MCF 10A (cell line): ENCODE measurements at regions of chr11 and their contacts with region 1.

Region 1: GRCh38 chr11:75142714-75143419 is 8.0 kb upstream of the SLCO2B1 start:
- DNase-seq: peak; percentile 90
- H3K4me3 Mint-ChIP-seq: no peak overlapping the region
- H3K27ac Mint-ChIP-seq: peak overlapping the region; percentile 53
- H3K4me1 Mint-ChIP-seq: peaks cover 16% of the 10 kb centered on the region
- H3K27me3 Mint-ChIP-seq: peaks cover 16% of the 10 kb centered on the region
- CTCF ChIP-seq: no peak

Region 2: DNA sequence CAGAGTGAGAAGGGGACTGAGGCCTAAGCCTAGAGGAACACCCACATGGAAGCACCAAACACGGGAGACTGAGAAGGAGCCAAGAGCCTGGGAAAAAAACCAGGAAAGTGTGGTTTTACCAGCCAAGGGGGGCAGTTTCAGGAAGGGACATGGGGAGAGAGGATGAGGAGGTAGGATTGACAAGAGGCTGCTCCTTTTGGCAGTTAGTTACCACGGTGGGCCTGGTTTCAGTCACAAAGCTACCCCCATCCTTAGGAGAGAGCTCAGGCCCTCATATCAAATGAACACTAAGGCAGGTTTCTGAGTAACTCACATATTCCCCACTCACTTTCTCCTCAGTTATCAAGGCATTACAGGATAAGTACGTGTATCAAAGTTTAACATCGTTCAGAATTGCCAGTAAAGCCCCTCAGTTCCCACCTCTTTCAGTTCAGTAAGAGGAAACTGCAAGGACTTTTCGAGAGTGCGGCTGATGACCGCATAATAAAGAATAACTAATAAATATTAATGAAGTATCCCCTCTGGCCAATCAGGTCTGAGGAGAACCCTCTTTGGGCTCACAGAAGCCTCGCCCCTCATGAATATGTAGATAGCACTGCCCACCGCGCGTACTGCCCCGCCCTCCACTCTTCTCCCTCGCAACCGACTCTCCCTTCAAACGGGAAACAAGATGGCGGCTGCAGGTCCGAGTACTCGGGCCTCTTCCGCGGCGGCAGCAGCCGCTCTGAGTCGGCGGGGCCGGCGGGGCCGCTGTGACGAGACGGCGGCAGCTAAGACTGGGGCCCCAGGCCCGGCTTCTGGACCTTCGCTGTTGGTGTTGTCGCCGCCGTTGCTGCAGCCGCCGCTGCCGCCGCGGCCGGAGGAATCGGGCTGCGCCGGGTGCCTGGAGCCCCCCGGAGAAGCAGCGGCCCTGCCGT is 394.4 kb before region 1 on chr11 and contains the start of gene RNF169:
- CTCF ChIA-PET with region 1: no interaction called
- POLR2A ChIA-PET with region 1: no interaction called
- intact Hi-C with region 1: no loop called
- DNase-seq: peak; percentile 96
- H3K4me3 Mint-ChIP-seq: peak within 1 kb of the TSS; percentile 91
- H3K27ac Mint-ChIP-seq: peak within 1 kb of the TSS; percentile 85
- H3K4me1 Mint-ChIP-seq: peaks cover 23% of the 10 kb centered on the region
- H3K27me3 Mint-ChIP-seq: no peaks in the 10 kb centered on the region
- CTCF ChIP-seq: no peak
- total RNA-seq, gene RNF169: 15.0 and 18.0 TPM in 2 replicates

Region 3: DNA sequence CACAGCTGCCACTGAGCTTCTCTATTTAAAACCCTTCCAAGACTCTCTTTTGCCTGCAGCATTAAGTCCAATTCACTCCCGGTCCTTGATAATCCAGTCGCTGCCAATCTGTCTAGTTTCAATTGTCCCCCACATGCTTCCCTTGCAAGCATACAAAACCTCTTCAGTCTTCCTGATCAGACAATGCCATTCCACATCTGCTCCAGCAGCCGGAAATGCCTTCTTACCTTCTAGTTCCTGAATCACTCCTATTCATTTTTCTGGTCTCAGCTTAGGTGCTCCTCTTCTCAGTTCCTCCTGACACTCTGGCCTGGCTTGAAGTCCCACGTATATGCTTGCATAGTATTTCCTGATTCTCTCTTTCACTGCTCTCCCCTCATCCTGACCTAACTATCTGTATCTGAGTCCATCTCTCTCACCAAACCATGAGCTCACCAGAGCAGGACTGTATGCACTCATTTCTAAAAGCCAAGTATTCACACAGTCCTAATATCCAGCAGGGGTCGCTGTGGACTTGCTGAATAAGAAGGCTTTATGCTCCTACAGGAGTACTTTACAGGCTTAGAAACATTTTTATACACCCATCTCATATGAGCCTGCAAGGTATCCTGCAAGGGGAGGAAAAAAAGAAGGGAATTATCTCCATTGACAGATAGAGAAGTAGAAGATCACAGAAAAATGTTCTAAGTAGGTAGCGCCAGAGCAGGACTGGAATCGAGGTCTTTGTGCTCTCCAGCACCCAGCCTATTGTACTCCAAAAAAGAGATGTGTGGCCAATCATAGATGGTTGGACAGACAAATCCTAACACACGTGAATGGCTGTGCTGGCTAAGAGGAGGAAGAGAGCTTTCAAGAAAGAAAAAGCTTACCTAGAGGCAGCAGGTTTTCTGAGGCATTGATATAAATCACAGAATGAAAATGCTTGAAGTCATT is 213.2 kb before region 1 on chr11:
- CTCF ChIA-PET with region 1: interaction called, 7 read pairs
- POLR2A ChIA-PET with region 1: no interaction called
- intact Hi-C with region 1: loop called (anchors 5 kb)
- DNase-seq: peak; percentile 94
- H3K4me3 Mint-ChIP-seq: no peak overlapping the region
- H3K27ac Mint-ChIP-seq: no peak overlapping the region
- H3K4me1 Mint-ChIP-seq: peaks cover 4% of the 10 kb centered on the region
- H3K27me3 Mint-ChIP-seq: no peaks in the 10 kb centered on the region
- CTCF ChIP-seq: peak; percentile 84

Region 4: GRCh38 chr11:75040167-75040770 is 102.6 kb before region 1 on chr11:
- CTCF ChIA-PET with region 1: no interaction called
- POLR2A ChIA-PET with region 1: no interaction called
- intact Hi-C with region 1: no loop called
- DNase-seq: no peak
- H3K4me3 Mint-ChIP-seq: no peak overlapping the region
- H3K27ac Mint-ChIP-seq: no peak overlapping the region
- H3K4me1 Mint-ChIP-seq: peaks cover 13% of the 10 kb centered on the region
- H3K27me3 Mint-ChIP-seq: peaks cover 12% of the 10 kb centered on the region
- CTCF ChIP-seq: no peak

Region 5: DNA sequence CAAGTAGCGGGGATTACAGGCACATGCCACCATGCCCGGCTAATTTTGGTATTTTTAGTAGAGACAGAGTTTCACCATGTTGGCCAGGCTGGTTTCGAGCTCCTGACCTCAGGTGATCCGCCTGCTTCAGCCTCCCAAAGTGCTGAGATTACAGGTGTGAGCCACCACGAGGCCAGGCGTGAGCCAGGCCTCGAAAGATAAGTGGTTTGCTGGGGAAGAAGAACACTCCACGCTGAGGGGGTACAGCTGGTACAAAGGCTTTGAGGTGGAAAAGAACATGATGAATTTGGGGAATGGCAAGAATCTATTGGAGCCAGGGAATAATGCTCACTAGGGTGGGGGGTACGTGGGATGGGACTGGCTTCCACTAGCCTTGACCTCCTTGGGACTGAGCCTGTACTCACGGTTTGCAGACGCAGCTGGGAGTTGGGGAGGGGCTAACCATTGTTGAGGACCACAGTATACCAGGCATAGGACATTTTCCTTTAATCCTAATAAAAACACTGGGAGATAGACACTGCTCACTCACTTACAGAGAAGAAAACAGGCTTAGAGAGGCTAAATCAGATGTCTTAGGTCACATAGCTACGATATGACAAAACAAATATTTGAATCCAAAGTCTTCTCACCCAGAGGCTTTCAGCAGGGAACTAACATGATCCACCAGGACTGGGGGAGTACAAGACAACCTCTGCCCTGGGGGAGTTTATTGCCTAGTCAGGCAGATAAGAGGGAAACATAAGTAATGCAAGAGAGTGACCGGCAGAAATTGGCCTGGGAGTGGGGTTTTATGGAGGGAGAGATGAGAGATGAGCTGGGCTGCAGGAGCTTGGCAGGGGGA is 12.9 kb after region 1 on chr11:
- CTCF ChIA-PET with region 1: interaction called, 21 read pairs
- POLR2A ChIA-PET with region 1: interaction called, 4 read pairs
- intact Hi-C with region 1: no loop called
- DNase-seq: no peak
- H3K4me3 Mint-ChIP-seq: no peak overlapping the region
- H3K27ac Mint-ChIP-seq: no peak overlapping the region
- H3K4me1 Mint-ChIP-seq: peaks cover 6% of the 10 kb centered on the region
- H3K27me3 Mint-ChIP-seq: peaks cover 22% of the 10 kb centered on the region
- CTCF ChIP-seq: no peak

Region 6: DNA sequence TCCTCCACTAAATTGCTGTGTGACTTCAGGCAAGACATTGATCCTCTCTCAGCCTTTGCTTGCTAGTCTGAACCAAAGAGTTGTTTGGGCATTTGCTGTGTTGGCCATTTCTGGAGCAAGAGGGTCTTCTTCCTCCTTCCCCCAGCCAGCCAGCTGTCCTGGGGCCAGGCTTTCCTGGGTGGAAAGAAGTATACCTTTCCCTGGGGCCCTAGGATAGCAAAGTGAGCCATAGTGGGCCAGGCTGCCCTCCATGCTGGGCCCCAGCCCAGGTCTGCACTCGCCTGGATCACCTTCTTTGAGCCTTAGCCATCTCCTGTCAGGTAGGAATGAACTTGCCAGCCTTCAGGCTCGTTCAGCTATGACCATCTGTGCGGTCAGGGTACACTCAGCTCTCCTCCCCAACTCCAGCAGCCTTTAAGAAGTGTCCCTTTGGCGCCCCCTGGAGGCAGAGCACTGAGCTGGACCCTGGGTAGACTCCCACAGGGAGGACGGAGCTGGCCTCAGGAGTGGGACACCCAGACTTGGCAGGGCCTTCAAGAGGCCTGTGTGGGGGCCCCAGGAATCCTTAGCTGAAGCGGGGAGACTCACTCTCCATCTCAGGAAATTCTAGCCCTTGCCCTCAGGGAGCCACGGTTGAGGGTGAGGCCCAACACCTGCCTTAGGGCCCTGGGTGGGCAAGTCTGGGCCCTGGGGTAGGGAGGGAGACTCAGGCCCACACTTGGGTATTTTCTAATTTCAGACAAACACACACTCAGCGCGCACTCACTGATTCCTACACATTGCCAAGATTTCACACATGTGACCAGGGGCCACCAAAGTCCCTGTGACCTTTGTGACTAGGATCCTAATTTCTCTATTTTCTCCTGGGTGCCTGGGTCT is 62.1 kb after region 1 on chr11:
- CTCF ChIA-PET with region 1: interaction called, 227 read pairs
- POLR2A ChIA-PET with region 1: interaction called, 6 read pairs
- intact Hi-C with region 1: loop called (anchors 1 kb)
- DNase-seq: peak; percentile 83
- H3K4me3 Mint-ChIP-seq: no peak overlapping the region
- H3K27ac Mint-ChIP-seq: no peak overlapping the region
- H3K4me1 Mint-ChIP-seq: no peaks in the 10 kb centered on the region
- H3K27me3 Mint-ChIP-seq: peaks cover 32% of the 10 kb centered on the region
- CTCF ChIP-seq: peak; percentile 83

Region 7: DNA sequence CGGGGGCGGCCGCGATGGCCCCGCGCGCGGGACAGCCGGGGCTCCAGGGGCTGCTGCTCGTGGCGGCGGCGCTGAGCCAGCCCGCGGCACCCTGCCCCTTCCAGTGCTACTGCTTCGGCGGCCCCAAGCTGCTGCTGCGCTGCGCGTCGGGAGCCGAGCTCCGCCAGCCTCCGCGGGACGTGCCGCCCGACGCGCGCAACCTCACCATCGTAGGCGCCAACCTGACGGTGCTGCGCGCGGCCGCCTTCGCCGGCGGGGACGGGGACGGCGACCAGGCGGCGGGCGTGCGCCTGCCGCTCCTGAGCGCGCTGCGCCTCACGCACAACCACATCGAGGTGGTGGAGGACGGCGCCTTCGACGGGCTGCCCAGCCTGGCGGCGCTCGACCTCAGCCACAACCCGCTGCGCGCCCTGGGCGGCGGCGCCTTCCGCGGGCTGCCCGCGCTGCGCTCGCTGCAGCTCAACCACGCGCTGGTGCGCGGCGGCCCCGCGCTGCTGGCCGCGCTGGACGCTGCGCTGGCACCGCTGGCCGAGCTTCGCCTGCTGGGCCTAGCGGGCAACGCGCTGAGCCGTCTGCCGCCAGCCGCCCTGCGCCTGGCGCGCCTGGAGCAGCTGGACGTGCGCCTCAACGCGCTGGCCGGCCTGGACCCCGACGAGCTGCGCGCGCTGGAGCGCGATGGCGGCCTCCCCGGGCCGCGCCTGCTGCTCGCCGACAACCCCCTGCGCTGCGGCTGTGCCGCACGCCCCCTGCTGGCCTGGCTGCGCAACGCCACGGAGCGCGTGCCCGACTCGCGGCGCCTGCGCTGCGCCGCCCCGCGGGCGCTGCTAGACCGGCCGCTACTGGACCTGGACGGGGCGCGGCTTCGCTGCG is 98.4 kb after region 1 on chr11:
- CTCF ChIA-PET with region 1: interaction called, 251 read pairs
- POLR2A ChIA-PET with region 1: interaction called, 4 read pairs
- intact Hi-C with region 1: no loop called
- DNase-seq: peak; percentile 36
- H3K4me3 Mint-ChIP-seq: peak overlapping the region; percentile 66
- H3K27ac Mint-ChIP-seq: no peak overlapping the region
- H3K4me1 Mint-ChIP-seq: no peaks in the 10 kb centered on the region
- H3K27me3 Mint-ChIP-seq: peaks cover 44% of the 10 kb centered on the region
- CTCF ChIP-seq: peak; percentile 70